Left cardiac atrium (tissue), 4 donors: ENCODE measurements at regions of chr20 and their contacts with region 1.

Region 1: GRCh38 chr20:9359561-9360308 is 154.7 kb upstream of the LAMP5 start:
- DNase-seq: peak; percentile 33
- ATAC-seq: peak; percentile 66 to 72

Region 2: DNA sequence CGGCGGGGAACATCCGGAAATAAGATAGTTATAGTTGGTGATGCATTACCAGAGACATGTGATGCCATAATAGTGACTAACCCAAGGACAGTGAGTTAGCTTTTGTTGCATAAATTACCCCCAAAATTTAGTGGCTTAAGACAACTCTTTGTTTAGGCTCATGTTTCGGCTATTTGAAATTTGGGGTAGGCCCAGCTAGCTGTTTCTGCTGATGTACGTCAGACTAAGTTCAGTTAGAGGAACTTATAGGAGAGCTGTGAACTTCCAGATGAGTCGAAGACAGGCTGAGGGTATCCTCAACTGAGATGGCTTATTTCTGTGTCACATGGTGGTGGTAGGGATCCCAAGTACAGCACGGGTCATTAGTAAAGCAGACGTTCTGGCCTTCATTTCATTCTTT is 861.2 kb before region 1 on chr20:
- intact Hi-C with region 1: no loop called
- DNase-seq: no peak
- ATAC-seq: no peak

Region 3: DNA sequence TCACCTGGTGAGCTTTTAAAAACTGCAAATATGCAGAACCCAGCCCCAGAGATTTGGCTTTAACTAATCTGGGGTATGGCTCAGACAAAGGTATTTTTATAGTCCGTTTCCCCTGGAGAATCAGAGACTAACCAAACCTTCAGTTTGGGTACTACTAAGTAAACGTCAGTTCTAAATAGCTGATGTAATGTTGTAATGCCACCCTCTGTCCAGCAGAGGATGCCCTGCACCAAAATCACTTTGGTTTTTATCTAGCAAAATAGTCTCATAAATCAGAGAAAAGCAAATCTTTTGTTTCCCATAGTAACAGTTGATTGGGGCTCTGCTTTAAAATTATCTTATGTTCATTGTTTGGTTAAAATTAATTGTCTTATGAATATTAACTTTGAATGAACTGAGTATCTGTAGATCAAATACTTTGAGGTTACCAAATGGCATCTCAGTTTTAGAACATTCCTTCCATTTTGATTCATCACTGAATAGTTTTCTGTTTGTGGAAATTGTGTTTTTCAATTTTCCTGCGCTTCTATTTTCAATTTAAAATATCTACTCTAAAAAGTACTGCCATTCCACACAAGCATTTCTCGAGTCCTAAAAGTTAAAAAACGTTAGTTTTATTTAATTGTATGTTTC is 569.2 kb before region 1 on chr20:
- intact Hi-C with region 1: loop called in 1 of 2 experiments (anchors 5 kb)
- DNase-seq: no peak
- ATAC-seq: peak; percentile 15 to 40

Region 4: GRCh38 chr20:8853805-8854338 is 505.9 kb before region 1 on chr20:
- intact Hi-C with region 1: loop called (anchors 5 to 10 kb)
- DNase-seq: no peak
- ATAC-seq: peak; percentile 85 to 87

Region 5: DNA sequence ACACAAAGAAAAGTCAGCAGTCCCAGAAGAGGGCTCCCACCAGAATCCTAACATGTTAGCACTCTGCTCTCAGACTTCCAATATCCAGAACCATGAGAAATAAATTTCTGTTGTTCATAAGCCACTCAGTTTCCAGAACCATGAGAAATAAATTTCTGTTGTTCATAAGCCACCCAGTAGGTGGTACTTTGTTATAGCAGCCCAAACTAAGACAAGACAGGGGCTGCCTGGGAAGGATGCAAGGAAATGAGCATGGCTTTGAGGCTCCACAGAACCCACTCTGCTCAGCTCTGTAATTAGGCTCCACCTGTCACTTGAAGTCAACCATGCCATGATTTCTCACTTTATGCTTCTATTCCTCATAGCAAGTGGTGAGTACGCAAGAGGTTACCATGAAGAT is 383.4 kb before region 1 on chr20:
- intact Hi-C with region 1: loop called in 1 of 2 experiments (anchors 5 kb)
- DNase-seq: no peak
- ATAC-seq: no peak

Region 6: DNA sequence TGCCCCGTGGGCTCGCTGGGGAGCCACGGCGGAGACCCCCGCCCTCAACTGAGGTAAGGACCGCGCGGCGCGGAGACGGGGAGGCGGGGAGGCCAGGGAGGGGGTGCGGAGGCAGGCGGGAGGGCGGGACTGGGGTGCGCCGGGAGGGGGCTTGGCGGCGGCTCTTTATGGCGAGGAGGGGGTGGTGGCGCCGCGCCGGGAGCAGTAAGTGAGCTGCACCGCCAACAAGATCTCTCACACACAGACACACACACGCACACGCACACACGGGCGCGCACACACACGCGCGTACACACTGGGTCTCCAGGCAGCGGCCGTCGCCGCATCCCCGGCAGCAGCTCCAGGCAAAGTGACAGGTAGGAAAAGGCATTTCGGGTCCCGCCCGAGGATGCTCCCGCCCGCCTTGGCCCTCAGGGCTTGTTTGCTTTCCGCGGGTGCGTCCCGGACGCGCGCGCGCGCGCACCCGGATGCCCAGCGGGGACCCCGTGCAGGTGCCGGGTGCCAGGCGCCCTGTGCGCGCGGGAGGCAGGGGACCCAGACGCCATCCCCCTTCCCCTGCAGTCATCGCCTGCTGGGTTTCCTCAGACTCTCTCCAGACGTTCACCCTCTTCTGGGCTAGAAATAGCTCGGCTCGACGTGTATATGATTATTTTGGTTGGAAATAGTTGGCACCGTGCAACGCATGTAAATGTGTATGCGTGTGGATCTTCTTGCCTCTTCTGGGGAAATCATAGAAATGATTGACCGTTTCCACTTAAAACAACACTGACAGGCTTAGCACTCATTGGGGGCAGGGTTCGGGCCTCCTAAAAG is 290.7 kb before region 1 on chr20 and contains the start of gene PLCB4:
- intact Hi-C with region 1: loop called (anchors 10 kb)
- DNase-seq: peak; percentile 57
- ATAC-seq: peak; percentile 22 to 39
- total RNA-seq, gene PLCB4: 29.7 to 33.4 TPM

Region 7: DNA sequence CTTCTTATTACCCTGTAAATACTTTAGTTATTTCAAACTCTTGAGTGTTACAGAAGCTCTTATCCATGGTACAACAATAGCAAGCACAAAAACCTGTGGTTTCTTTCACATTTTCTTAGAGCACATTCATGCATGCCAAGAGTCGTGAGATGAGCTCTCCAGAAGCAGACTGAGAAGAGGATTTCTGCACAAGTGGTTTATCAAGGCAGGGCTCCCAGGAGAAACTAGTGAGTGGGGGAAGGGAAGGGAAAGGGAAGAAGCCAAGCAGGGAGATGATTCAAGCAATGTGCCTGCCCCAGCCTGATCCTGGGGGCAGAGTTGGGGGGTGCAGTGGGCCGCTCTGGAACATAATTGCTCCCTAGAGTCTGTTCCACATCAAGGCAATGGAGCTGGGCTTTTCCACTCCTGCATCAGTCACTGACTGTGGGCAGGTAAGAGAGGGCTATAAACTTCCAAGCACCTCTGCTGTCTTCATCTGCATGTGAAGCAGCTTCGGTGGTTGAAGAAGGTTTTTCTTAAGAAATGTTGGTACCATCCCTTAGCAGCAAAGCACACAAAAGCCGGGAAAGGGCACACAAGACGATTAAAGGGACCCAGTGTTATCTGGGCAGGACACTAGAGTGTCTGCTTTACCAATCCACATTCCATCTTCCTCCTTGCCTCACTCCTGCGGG is 138.7 kb before region 1 on chr20:
- intact Hi-C with region 1: loop called in 1 of 2 experiments (anchors 10 kb)
- DNase-seq: no peak
- ATAC-seq: no peak

Region 8: GRCh38 chr20:9397928-9398327 is 38.2 kb after region 1 on chr20:
- intact Hi-C with region 1: no loop called
- DNase-seq: no peak
- ATAC-seq: peak; percentile 56 to 82